ENCODE measurements at regions of chr7 and their contacts with region 1.

Region 1: GRCh38 chr7:43834463-43835251 is 34.7 kb downstream of the MRPS24 start:
- DNase-seq: peak in 8 of 9 donors; percentile 25 to 56 (median 46)
- ATAC-seq: peak; percentile 44
- H3K4me3 ChIP-seq: peak overlapping the region; percentile 79
- H3K4me3 Mint-ChIP-seq: peak overlapping the region; percentile 74 to 96 (median 84)
- H3K27ac ChIP-seq: peak overlapping the region; percentile 33
- H3K27ac Mint-ChIP-seq: peak overlapping the region; percentile 79 to 95 (median 86)
- H3K4me1 ChIP-seq: peaks cover 8 to 15% of the 10 kb centered on the region in 2 donors
- H3K4me1 Mint-ChIP-seq: peaks cover 2 to 27% (median 21%) of the 10 kb centered on the region in 7 donors
- H3K27me3 ChIP-seq: no peaks in the 10 kb centered on the region
- H3K27me3 Mint-ChIP-seq: peaks cover 0 to 6% (median 0%) of the 10 kb centered on the region in 5 donors

Region 2: GRCh38 chr7:42128703-42129102 is 1706.0 kb before region 1 on chr7:
- CTCF ChIA-PET with region 1: no interaction called
- POLR2A ChIA-PET with region 1: no interaction called
- intact Hi-C with region 1: loop called in 1 of 2 experiments (anchors 10 kb)
- DNase-seq: peak in 1 of 9 donors; percentile 7
- ATAC-seq: no peak
- H3K4me3 ChIP-seq: no peak overlapping the region
- H3K4me3 Mint-ChIP-seq: no peak overlapping the region
- H3K27ac ChIP-seq: no peak overlapping the region
- H3K27ac Mint-ChIP-seq: no peak overlapping the region
- H3K4me1 ChIP-seq: no peaks in the 10 kb centered on the region
- H3K4me1 Mint-ChIP-seq: peaks cover 0 to 6% (median 0%) of the 10 kb centered on the region in 7 donors
- H3K27me3 ChIP-seq: no peaks in the 10 kb centered on the region
- H3K27me3 Mint-ChIP-seq: peaks cover 0 to 5% (median 3%) of the 10 kb centered on the region in 5 donors

Region 3: GRCh38 chr7:42931834-42932651 is 902.6 kb before region 1 on chr7 and contains the starts of genes MRPL32 and PSMA2:
- CTCF ChIA-PET with region 1: interaction called, 4 read pairs
- POLR2A ChIA-PET with region 1: interaction called, 3 read pairs
- intact Hi-C with region 1: loop called (anchors 1 to 2 kb)
- DNase-seq: peak; percentile 83 to 97 (median 94)
- ATAC-seq: peak; percentile 99
- H3K4me3 ChIP-seq: peak within 1 kb of the TSS; percentile 100
- H3K4me3 Mint-ChIP-seq: peak within 1 kb of the TSS; percentile 88 to 100 (median 98)
- H3K27ac ChIP-seq: peak within 1 kb of the TSS; percentile 89
- H3K27ac Mint-ChIP-seq: peak within 1 kb of the TSS; percentile 92 to 100 (median 97)
- H3K4me1 ChIP-seq: peaks cover 24 to 48% of the 10 kb centered on the region in 2 donors
- H3K4me1 Mint-ChIP-seq: peaks cover 31 to 93% (median 71%) of the 10 kb centered on the region in 7 donors
- H3K27me3 ChIP-seq: no peaks in the 10 kb centered on the region
- H3K27me3 Mint-ChIP-seq: no peaks in the 10 kb centered on the region
- total RNA-seq, gene MRPL32: 27.7 to 58.2 (median 53.4) TPM
- total RNA-seq, gene PSMA2: 29.3 to 144 (median 35.3) TPM

Region 4: GRCh38 chr7:43260980-43261878 is 573.4 kb before region 1 on chr7:
- CTCF ChIA-PET with region 1: no interaction called
- POLR2A ChIA-PET with region 1: no interaction called
- intact Hi-C with region 1: loop called in 1 of 2 experiments (anchors 1 kb)
- DNase-seq: peak; percentile 6 to 65 (median 38)
- ATAC-seq: peak; percentile 65
- H3K4me3 ChIP-seq: no peak overlapping the region
- H3K4me3 Mint-ChIP-seq: no peak overlapping the region
- H3K27ac ChIP-seq: no peak overlapping the region
- H3K27ac Mint-ChIP-seq: no peak overlapping the region
- H3K4me1 ChIP-seq: no peaks in the 10 kb centered on the region
- H3K4me1 Mint-ChIP-seq: no peaks in the 10 kb centered on the region
- H3K27me3 ChIP-seq: no peaks in the 10 kb centered on the region
- H3K27me3 Mint-ChIP-seq: peaks cover 0 to 18% (median 7%) of the 10 kb centered on the region in 5 donors

Region 5: DNA sequence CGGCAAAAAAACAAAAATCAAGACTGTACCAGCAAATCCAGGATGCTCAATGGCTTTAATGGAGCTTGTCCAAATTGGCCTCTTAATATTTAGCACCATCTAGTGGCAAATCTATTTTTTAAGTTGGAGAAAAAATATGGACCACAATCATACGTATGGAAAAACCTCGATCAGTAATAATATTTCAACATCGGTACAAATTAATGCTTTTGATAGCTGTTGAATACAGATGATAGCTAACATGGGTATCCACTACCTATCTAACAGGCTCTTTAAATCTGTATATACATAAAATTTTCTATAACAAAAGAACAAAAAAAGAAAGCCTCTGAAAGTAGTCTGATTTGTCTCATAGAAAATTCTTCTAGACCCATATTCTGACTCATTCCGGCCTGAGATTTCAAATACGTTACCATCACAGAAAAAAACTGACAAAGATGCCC is 134.6 kb before region 1 on chr7:
- CTCF ChIA-PET with region 1: interaction called, 27 read pairs
- POLR2A ChIA-PET with region 1: interaction called, 4 read pairs
- intact Hi-C with region 1: loop called (anchors 1 kb)
- DNase-seq: peak in 7 of 9 donors; percentile 38 to 73 (median 67)
- ATAC-seq: peak; percentile 89
- H3K4me3 ChIP-seq: no peak overlapping the region
- H3K4me3 Mint-ChIP-seq: peak overlapping the region in 9 of 10 donors; percentile 3 to 75 (median 64)
- H3K27ac ChIP-seq: peak overlapping the region; percentile 32
- H3K27ac Mint-ChIP-seq: peak overlapping the region in 8 of 9 donors; percentile 49 to 81 (median 70)
- H3K4me1 ChIP-seq: peaks cover 12 to 30% of the 10 kb centered on the region in 2 donors
- H3K4me1 Mint-ChIP-seq: peaks cover 23 to 56% (median 44%) of the 10 kb centered on the region in 7 donors
- H3K27me3 ChIP-seq: no peaks in the 10 kb centered on the region
- H3K27me3 Mint-ChIP-seq: no peaks in the 10 kb centered on the region

Region 6: GRCh38 chr7:43758029-43758821 is 76.4 kb before region 1 on chr7 and contains the start of gene BLVRA:
- CTCF ChIA-PET with region 1: interaction called, 8 read pairs
- POLR2A ChIA-PET with region 1: interaction called, 3 read pairs
- intact Hi-C with region 1: loop called (anchors 1 to 2 kb)
- DNase-seq: peak; percentile 55 to 82 (median 66)
- ATAC-seq: peak; percentile 88
- H3K4me3 ChIP-seq: peak within 1 kb of the TSS; percentile 90
- H3K4me3 Mint-ChIP-seq: peak within 1 kb of the TSS; percentile 72 to 93 (median 89)
- H3K27ac ChIP-seq: peak within 1 kb of the TSS; percentile 77
- H3K27ac Mint-ChIP-seq: peak within 1 kb of the TSS; percentile 72 to 94 (median 88)
- H3K4me1 ChIP-seq: peaks cover 3 to 5% of the 10 kb centered on the region in 2 donors
- H3K4me1 Mint-ChIP-seq: peaks cover 24 to 48% (median 36%) of the 10 kb centered on the region in 7 donors
- H3K27me3 ChIP-seq: no peaks in the 10 kb centered on the region
- H3K27me3 Mint-ChIP-seq: peaks cover 0 to 10% (median 0%) of the 10 kb centered on the region in 5 donors
- total RNA-seq, gene BLVRA: 11.2 to 41.2 (median 16.1) TPM